Activated T-helper 2 cell treated with anti-CD3 and anti-CD28 coated beads, Interferon-gamma antibody, Interleukin-2, Interleukin-4, amounts not matched to agents 10 μg/mL and 5 μg/mL and 100 μg/mL, durations not matched to agents 14 hours and 24 hours and 36 hours (primary cell): ENCODE measurements at regions of chr5 and their contacts with region 1.

Region 1: DNA sequence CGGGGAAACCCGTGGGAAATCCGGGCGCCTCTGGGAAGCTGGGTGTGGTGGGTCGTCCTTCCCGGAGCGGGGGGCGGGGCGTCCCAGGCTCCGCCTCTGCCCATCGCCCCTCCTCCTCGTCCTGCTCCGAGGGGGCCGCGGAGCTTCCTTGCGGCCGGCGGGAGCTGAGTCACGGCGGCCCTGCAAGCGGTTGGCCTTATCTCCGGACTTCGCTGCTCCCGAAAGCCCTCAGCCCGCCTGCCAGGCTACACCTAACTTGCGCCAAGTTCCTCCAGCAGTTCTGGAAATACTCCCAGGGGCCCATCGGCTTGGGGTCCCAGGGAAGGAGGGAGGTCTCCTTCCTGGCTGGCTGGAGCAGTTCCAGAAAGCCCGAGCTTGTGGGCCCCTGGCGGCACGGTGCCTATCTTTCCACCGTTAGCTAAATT is 54.1 kb upstream of the CDKN2AIPNL start:
- DNase-seq: peak; percentile 39
- H3K4me3 Mint-ChIP-seq: peak overlapping the region; percentile 68
- H3K27ac Mint-ChIP-seq: peak overlapping the region; percentile 55
- H3K4me1 Mint-ChIP-seq: peaks cover 7% of the 10 kb centered on the region
- H3K27me3 Mint-ChIP-seq: peaks cover 2% of the 10 kb centered on the region

Region 2: DNA sequence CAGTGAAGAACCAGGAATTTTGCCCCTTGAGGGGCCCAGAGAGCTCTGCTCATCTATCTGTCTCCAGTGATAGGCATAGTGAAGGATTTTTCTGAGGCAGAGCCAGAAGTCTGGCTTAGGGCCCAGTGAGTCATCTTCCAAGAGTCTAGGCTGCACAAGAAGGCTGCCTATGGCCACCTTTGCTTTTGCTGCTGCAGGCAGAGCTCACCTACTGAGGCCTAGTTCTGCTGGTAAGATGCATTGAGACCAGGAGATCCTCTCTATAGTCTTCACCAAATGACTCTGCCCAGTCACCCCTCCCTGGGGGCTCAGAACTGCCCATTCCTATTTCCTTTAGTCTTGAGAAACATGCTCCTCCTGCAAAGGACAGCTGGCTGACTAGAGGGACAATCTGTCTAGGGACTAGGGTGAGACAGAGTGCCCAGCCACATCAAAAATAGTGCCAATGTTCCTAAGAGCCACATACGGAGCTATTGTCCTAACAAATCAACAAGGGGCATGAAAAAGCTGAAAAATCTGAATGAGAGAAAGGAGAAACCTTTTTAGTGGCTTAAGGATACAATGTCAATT is 13.8 kb before region 1 on chr5:
- intact Hi-C with region 1: no loop called
- DNase-seq: no peak
- H3K4me3 Mint-ChIP-seq: no peak overlapping the region
- H3K27ac Mint-ChIP-seq: no peak overlapping the region
- H3K4me1 Mint-ChIP-seq: peaks cover 3% of the 10 kb centered on the region
- H3K27me3 Mint-ChIP-seq: peaks cover 2% of the 10 kb centered on the region

Region 3: DNA sequence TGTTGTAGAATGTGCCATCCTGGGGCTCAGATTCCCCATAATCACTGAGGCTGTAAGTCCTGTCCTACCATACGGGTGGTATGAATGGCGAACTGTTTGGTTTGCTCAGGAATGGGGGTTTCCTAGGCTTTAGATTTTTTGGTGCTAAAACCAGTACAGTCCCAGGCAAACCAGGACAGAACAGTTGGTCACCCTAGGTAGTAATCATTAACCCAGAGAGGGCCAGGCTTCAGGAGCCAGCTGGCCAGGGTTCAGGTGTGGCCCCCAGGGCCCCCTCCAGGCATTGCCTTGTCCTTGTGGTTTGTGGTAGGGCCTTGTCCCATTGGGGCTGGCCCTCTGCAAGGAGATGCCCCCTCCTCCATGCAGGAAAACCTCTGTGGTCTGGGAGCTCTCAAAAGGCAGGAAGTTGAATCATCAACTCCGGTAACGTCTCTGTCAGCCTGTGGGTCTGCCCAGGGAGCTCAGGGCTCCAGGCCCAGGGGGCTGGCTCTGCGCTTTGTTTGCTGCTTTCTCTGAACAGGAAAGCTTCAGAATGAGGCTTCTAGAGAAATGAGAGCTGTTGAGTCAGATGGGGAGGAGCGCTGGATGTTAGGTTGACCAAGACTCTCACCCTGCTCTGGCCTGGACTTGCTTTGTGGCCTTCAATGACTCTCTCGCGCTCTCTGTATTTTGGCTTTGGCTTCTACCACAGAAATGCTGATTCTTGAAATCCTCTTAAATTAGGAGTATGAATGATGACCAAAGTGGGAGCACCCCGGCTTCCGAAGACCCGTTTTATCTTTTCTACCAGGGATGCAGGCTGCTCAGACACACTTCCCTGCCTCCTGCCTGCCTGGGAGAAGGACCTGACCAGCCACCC is 37.5 kb after region 1 on chr5:
- intact Hi-C with region 1: loop called (anchors 2 kb)
- DNase-seq: peak; percentile 67
- H3K4me3 Mint-ChIP-seq: peak overlapping the region; percentile 64
- H3K27ac Mint-ChIP-seq: peak overlapping the region; percentile 99
- H3K4me1 Mint-ChIP-seq: peaks cover 40% of the 10 kb centered on the region
- H3K27me3 Mint-ChIP-seq: no peaks in the 10 kb centered on the region

Region 4: GRCh38 chr5:134659456-134659855 is 193.6 kb after region 1 on chr5:
- intact Hi-C with region 1: no loop called
- DNase-seq: no peak
- H3K4me3 Mint-ChIP-seq: no peak overlapping the region
- H3K27ac Mint-ChIP-seq: no peak overlapping the region
- H3K4me1 Mint-ChIP-seq: peaks cover 15% of the 10 kb centered on the region
- H3K27me3 Mint-ChIP-seq: no peaks in the 10 kb centered on the region